RWPE1 (cell line): ENCODE measurements at regions of chr3 and their contacts with region 1.

Region 1: GRCh38 chr3:49734752-49735151 is 11.0 kb upstream of the GMPPB start:
- DNase-seq: no peak
- H3K27ac ChIP-seq: no peak overlapping the region
- CTCF ChIP-seq: no peak

Region 2: GRCh38 chr3:49781415-49782199 is 46.9 kb after region 1 on chr3:
- CTCF ChIA-PET with region 1: no interaction called
- POLR2A ChIA-PET with region 1: interaction called, 12 read pairs
- DNase-seq: no peak
- H3K27ac ChIP-seq: no peak overlapping the region; the same call in 1 of the 2 replicates
- CTCF ChIP-seq: no peak